A549 (cell line): ENCODE measurements at regions of chr17 and their contacts with region 1.

Region 1: DNA sequence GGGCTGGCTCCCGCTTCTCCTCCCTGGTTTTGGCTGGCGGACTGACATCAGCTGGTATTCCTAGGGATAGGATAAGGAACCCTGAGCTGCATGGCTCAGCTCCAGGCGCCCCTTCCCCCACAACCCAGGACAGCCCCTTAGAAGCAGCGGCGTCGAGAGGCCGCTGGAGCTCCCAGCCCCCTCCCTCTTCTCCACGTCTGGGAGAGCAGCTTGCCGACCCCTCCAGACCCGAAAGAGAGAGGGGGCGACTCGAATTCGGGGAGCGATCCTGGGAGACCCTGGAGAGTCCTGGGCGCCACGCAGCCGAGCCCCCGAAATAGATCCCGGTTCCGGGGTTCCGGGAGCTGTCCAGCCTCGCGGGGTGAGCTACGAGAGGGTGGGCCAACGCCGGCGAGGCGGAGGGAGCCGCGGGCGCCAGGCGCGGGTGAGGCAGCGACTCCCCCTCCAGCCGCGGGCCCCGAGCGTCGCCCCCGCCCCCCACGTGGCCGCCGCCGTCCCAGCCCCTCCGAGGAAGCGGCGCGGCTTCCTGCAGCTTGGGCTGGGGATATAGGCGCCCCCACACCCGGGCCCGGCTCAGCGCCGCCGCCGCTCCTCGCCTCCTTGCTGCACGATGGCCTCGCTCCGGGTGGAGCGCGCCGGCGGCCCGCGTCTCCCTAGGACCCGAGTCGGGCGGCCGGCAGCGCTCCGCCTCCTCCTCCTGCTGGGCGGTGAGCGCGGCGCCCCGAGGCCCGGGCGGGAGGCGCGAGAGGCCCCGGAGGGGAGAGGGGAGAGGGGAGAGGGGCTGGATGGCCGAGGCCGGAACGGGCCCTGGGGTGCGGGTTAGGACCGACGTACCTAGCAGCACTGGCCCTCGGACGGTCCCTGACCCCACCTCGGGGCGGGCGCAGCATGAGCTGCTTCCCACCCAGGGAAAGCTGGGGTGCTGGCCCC is at the start of gene RAMP2:
- DNase-seq: peak in 1 of 2 experiments; percentile 41
- ATAC-seq: peak; percentile 53 to 65; a peak in 4 of 6 replicates
- H3K4me3 ChIP-seq: peak within 1 kb of the TSS; percentile 56
- H3K27ac ChIP-seq: peak within 1 kb of the TSS; percentile 75 to 82
- H3K4me1 ChIP-seq: peaks cover 15% of the 10 kb centered on the region
- CTCF ChIP-seq: no peak
- EP300 ChIP-seq: no peak
- POLR2A ChIP-seq: no peak
- RAD21 ChIP-seq: no peak
- polyA plus RNA-seq, gene RAMP2: 0.49 and 1.2 TPM in 2 replicates

Region 2: DNA sequence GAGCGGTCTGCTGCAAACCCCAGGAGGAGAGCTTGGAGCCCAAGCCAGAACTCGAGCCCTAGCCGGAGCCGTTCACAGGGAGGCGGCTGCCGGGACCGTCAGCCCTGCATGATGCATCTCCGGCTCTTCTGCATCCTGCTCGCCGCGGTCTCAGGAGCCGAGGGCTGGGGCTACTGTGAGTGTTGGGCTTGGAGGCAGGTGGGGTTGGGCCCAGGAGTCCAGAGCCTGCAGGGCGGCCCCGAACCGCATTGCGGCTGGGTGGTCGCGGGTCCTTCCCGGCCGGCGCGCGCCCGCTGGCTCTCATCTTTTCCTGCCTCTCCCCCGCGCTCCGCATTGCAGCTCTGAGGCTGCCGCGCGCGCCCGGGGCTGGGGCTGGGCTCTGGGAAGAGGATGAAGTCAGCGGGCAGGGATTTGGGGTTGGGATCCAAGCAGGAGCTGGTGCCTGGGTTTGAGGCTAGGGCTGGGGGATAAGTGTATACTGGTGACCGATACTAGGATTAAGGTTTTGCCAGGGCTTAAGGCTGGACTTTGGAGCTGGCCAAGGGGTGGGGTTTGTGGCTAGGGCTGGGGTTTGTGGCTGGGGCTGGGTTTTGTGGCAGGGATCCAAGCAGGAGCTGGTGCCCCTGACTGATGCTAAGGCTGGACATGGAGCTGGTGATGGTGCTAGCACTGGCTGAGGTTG is 78.1 kb before region 1 on chr17:
- CTCF ChIA-PET with region 1: interaction called, 11 read pairs
- POLR2A ChIA-PET with region 1: no interaction called
- DNase-seq: peak; percentile 46 to 58
- ATAC-seq: peak in 1 of 2 experiments; percentile 5; a peak in 3 of 6 replicates
- H3K4me3 ChIP-seq: peak overlapping the region; percentile 47
- H3K27ac ChIP-seq: peak overlapping the region; percentile 62 to 80
- H3K4me1 ChIP-seq: peaks cover 27% of the 10 kb centered on the region
- CTCF ChIP-seq: no peak
- EP300 ChIP-seq: no peak
- POLR2A ChIP-seq: no peak
- RAD21 ChIP-seq: no peak

Region 3: GRCh38 chr17:42720996-42721583 is 39.8 kb before region 1 on chr17:
- CTCF ChIA-PET with region 1: interaction called, 79 read pairs
- POLR2A ChIA-PET with region 1: no interaction called
- DNase-seq: peak; percentile 77 to 80
- ATAC-seq: peak; percentile 95 to 96
- H3K4me3 ChIP-seq: no peak overlapping the region
- H3K27ac ChIP-seq: no peak overlapping the region
- H3K4me1 ChIP-seq: no peaks in the 10 kb centered on the region
- CTCF ChIP-seq: peak; percentile 95
- EP300 ChIP-seq: no peak
- POLR2A ChIP-seq: no peak
- RAD21 ChIP-seq: peak; percentile 83 to 88

Region 4: GRCh38 chr17:42773290-42774035 is 12.5 kb after region 1 on chr17 and contains the start of gene VPS25:
- CTCF ChIA-PET with region 1: interaction called, 48 read pairs
- POLR2A ChIA-PET with region 1: interaction called, 18 read pairs
- DNase-seq: peak; percentile 92 to 98
- ATAC-seq: peak; percentile 98
- H3K4me3 ChIP-seq: peak within 1 kb of the TSS; percentile 65
- H3K27ac ChIP-seq: peak within 1 kb of the TSS; percentile 80 to 97
- H3K4me1 ChIP-seq: peaks cover 21% of the 10 kb centered on the region
- CTCF ChIP-seq: no peak; the same call in 2 of the 3 replicates
- EP300 ChIP-seq: no peak
- POLR2A ChIP-seq: peak; percentile 96
- RAD21 ChIP-seq: peak; percentile 17 to 29; a peak in 3 of 5 replicates
- polyA plus RNA-seq, gene VPS25: 143 and 173 TPM in 2 replicates

Region 5: DNA sequence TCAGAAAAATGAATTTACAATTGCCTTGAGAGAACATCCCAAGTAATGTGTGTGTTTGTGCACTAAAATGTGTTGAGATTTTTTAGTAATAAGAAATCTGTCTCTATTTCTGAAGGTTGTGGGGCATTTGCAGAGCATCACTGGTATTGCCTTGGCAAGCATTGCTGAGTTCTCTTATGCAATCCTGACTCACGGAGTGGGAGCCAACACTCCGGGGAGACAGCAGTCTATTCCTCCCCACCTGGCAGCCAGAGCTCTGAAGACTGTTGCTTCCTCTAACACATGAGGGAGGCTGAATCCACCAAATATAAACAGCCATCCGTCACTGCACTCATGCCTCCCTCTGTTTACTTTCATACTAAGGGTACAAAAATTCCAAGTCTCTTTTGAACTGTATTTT is 48.3 kb after region 1 on chr17:
- CTCF ChIA-PET with region 1: interaction called, 22 read pairs
- POLR2A ChIA-PET with region 1: no interaction called
- DNase-seq: peak; percentile 27 to 49
- ATAC-seq: peak; percentile 63 to 65; a peak in 3 of 6 replicates
- H3K4me3 ChIP-seq: no peak overlapping the region
- H3K27ac ChIP-seq: peak overlapping the region in 1 of 2 experiments; percentile 9; a peak in 1 of 6 replicates
- H3K4me1 ChIP-seq: peaks cover 21% of the 10 kb centered on the region
- CTCF ChIP-seq: no peak
- EP300 ChIP-seq: no peak
- POLR2A ChIP-seq: no peak
- RAD21 ChIP-seq: no peak

Region 6: DNA sequence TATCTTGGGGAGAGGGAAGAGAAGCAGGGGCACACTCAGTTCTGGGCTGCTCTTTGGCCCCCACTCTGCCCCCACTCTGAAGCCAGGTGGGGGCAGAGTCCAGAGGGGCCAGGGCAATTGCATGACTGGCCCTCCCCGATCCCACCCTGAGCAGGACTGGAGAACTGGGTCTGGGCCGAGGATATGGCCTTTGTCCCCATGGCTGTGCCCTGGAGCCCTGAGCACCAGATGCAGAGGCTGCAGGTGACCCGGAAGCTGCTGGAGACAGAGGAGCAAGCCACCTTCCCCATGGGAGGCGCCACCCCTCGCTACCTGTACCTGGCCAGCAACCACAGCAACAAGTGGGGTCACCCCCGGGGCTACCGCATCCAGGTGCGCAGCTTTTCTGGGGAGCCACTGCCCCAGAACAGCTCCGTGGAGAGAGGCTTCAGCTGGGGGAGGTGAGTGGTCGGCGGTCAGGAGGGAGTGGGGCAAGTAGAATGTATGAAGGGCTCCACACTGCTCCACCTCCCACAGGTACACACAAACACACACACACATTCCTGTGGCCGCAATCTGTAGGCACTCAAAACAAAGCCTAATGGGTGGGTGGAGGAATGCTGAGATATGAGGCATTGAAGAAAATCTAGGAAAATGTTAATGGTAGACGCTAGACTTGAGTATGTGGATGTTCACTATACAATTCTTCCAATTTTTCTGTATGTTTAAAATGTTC is 111.5 kb after region 1 on chr17:
- CTCF ChIA-PET with region 1: no interaction called
- POLR2A ChIA-PET with region 1: no interaction called
- DNase-seq: no peak
- ATAC-seq: no peak
- H3K4me3 ChIP-seq: no peak overlapping the region
- H3K27ac ChIP-seq: no peak overlapping the region
- H3K4me1 ChIP-seq: no peaks in the 10 kb centered on the region
- CTCF ChIP-seq: no peak
- EP300 ChIP-seq: no peak
- POLR2A ChIP-seq: no peak
- RAD21 ChIP-seq: no peak

Region 7: GRCh38 chr17:42895185-42895555 is 134.3 kb after region 1 on chr17:
- CTCF ChIA-PET with region 1: interaction called, 11 read pairs
- POLR2A ChIA-PET with region 1: no interaction called
- DNase-seq: peak; percentile 78 to 86
- ATAC-seq: peak; percentile 93 to 96
- H3K4me3 ChIP-seq: no peak overlapping the region
- H3K27ac ChIP-seq: peak overlapping the region; percentile 68 to 78
- H3K4me1 ChIP-seq: peaks cover 27% of the 10 kb centered on the region
- CTCF ChIP-seq: no peak
- EP300 ChIP-seq: no peak
- POLR2A ChIP-seq: no peak
- RAD21 ChIP-seq: no peak